ENCODE measurements at regions of chr6 and their contacts with region 1.

Region 1: GRCh38 chr6:35736253-35736894 is 458 bp upstream of the ARMC12 start:
- DNase-seq: peak; percentile 71 to 90 (median 85)
- ATAC-seq: peak; percentile 37
- H3K4me3 ChIP-seq: no peak overlapping the region
- H3K4me1 ChIP-seq: peaks cover 28% of the 10 kb centered on the region
- CTCF ChIP-seq: peak; percentile 87

Region 2: DNA sequence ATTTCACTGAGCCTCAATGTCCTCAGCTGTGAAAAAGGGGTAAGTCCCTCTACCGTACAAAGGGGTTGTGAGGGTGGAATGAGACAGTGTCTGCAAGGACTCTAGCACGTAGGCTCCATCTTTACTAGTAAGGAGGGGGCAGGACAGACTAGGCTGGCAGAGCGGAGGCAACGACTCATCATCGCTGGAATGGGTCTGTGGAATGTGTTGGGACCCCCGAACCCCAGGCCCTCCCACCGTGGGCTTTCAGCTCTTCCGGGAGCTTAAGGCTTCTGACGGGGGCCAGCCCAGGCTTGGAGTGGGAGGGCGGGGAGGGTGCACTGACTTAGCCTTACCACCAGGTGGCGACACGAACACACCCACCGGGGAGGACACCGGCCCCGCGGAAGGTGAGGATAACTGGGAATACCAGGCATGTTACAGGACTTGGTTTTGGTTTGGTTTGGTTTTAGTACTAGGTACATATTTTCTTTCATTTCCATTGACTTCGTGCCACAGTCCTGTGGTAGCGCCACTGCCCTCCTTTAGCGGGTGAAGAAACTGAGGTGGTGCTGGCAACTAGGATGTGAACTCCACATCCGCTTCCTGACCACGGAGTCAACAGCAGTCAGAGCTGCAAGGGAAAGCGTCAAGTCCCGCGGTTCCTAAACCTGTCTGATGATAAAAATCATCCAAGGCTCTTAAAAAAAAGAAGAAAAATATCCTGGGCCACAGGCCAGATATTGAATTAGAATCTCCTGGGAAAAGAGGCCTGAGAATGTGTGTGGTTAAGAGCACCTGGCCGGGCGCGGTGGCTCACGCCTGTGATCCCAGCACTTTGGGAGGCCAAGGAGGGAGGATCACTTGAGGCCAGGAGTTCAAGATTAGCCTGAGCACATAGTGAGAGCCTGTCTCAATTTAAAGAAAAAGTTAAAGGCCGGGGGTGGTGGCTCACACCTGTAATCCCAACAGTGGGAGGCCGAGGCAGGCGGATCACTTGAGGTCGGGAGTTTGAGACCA is 213.4 kb before region 1 on chr6:
- intact Hi-C with region 1: loop called (anchors 5 kb)
- DNase-seq: peak; percentile 73 to 82 (median 77)
- ATAC-seq: peak; percentile 97
- H3K4me3 ChIP-seq: no peak overlapping the region
- H3K4me1 ChIP-seq: no peaks in the 10 kb centered on the region
- CTCF ChIP-seq: peak; percentile 97

Region 3: DNA sequence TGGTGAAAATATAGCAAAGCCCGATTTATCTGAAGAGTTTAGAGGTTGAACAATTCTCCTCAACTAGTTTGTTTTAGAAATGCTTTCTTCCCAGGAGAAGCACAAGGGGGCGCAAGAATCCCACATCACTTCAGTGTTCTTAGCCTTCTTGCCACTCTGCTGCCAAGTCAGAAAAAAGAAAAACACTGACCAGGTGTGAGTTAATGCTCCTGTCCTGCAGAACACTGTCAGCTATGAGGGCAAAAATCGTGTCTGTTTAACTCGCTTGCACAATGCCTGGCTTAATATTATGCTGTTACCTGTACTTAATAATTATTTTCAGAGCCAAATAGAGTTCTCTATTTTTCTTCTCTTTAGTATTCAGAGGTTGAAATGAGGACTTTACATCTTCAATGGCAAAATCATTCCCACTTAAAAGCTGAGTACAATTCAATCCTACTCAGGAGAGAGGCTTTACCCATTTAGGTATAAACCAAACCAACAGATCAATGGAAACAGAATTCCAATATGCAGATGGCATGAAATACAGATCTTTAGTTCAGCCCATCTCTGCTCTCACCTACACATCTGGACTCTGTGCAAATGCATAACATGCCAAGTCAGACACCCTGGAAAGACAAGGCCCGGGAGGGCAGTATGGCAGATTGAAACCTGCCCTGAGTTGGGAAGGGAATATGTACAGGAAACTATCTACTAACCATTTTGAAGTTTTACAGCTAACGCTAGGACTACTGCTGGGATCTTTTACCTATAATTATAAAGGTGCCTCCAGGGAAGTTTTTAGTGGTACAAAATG is 152.3 kb before region 1 on chr6:
- intact Hi-C with region 1: loop called (anchors 2 to 5 kb)
- DNase-seq: peak in 1 of 3 donors; percentile 84
- ATAC-seq: peak; percentile 86
- H3K4me3 ChIP-seq: no peak overlapping the region
- H3K4me1 ChIP-seq: no peaks in the 10 kb centered on the region
- CTCF ChIP-seq: peak; percentile 46

Region 4: GRCh38 chr6:35642471-35643161 is 93.8 kb before region 1 on chr6:
- intact Hi-C with region 1: no loop called
- DNase-seq: no peak
- ATAC-seq: no peak
- H3K4me3 ChIP-seq: no peak overlapping the region
- H3K4me1 ChIP-seq: no peaks in the 10 kb centered on the region
- CTCF ChIP-seq: no peak

Region 5: DNA sequence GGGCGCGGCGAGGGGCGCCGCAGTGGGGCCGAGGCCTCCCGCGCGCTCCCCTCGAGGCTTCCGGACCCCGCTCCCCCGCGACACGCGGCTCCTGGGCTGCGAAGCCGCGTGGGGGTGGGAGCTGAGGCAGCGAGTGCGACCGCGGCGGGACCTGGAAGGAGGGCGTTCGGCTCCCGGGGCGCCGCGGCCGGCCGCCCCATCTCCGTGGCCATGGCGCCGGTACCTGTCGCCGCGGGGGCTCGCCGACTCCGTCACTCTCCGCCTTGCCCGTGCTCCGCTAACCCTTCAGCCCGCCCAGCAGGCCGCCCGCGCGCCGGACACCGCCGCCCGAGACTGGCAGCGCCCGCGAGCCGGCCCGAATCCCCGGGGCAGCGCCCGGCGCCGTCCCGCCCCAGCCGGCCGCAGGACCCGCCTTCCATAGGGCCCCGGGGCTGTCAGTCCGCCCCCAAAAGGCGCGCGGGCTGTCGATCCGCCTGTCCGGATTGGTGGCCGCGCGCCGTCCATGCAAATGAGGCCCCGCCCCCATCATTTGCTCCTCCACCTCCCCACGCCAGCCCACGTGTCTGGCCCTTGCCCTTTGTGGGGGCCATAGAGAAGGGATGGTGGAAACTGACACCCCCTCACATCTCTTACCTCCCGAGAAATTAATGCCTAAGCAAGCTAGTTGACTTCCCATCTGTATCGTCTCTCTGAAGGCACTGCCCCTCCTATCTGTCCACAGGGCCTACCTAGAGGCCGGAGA is 47.6 kb before region 1 on chr6 and contains the start of gene FKBP5:
- intact Hi-C with region 1: loop called in 1 of 2 experiments (anchors 5 kb)
- DNase-seq: peak; percentile 96 to 98 (median 96)
- ATAC-seq: peak; percentile 93
- H3K4me3 ChIP-seq: peak within 1 kb of the TSS; percentile 93
- H3K4me1 ChIP-seq: peaks cover 6% of the 10 kb centered on the region
- CTCF ChIP-seq: no peak
- total RNA-seq, gene FKBP5: 22.1 to 174 (median 150) TPM